ENCODE measurements at regions of chr17 and their contacts with region 1.

Region 1: GRCh38 chr17:40219073-40219860 is at the start of gene WIPF2:
- DNase-seq: peak; percentile 98
- ATAC-seq: peak; percentile 96
- H3K4me3 Mint-ChIP-seq: peak within 1 kb of the TSS; percentile 92
- H3K27ac Mint-ChIP-seq: peak within 1 kb of the TSS; percentile 100
- H3K4me1 Mint-ChIP-seq: peaks cover 26% of the 10 kb centered on the region
- H3K27me3 Mint-ChIP-seq: no peaks in the 10 kb centered on the region
- total RNA-seq, gene WIPF2: 24.1 to 26.1 TPM

Region 2: GRCh38 chr17:40203131-40203530 is 16.1 kb before region 1 on chr17:
- CTCF ChIA-PET with region 1: interaction called, 20 read pairs
- DNase-seq: no peak
- ATAC-seq: no peak
- H3K4me3 Mint-ChIP-seq: no peak overlapping the region
- H3K27ac Mint-ChIP-seq: no peak overlapping the region
- H3K4me1 Mint-ChIP-seq: peaks cover 7% of the 10 kb centered on the region
- H3K27me3 Mint-ChIP-seq: peaks cover 6% of the 10 kb centered on the region

Region 3: DNA sequence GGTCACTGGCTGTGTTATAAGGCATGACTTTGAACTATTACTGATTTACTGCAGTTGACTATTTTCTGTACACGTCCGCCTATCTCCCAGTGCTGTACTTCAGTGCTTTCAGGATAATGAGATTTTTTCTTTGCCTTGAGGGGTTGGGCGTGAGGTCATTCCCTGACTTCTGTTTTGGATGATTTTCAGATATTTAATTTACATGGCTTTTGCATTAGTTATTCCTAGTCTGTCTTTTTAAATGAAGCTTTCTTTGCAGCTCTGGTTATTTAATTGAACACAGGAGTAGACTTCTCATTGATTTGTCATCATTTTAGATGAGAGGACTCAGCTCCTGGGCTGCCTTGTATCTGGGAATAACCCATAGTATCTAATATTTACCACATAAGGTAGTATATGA is 23.5 kb after region 1 on chr17:
- CTCF ChIA-PET with region 1: interaction called, 10 read pairs
- DNase-seq: no peak
- ATAC-seq: no peak
- H3K4me3 Mint-ChIP-seq: no peak overlapping the region
- H3K27ac Mint-ChIP-seq: no peak overlapping the region
- H3K4me1 Mint-ChIP-seq: peaks cover 12% of the 10 kb centered on the region
- H3K27me3 Mint-ChIP-seq: no peaks in the 10 kb centered on the region

Region 4: GRCh38 chr17:40281663-40282062 is 62.4 kb after region 1 on chr17:
- CTCF ChIA-PET with region 1: interaction called, 14 read pairs
- DNase-seq: peak; percentile 59
- ATAC-seq: peak; percentile 41
- H3K4me3 Mint-ChIP-seq: peak overlapping the region; percentile 35
- H3K27ac Mint-ChIP-seq: peak overlapping the region; percentile 74
- H3K4me1 Mint-ChIP-seq: peaks cover 49% of the 10 kb centered on the region
- H3K27me3 Mint-ChIP-seq: no peaks in the 10 kb centered on the region

Region 5: GRCh38 chr17:40287494-40288369 is 68.5 kb after region 1 on chr17 and contains the start of gene CDC6:
- CTCF ChIA-PET with region 1: interaction called, 15 read pairs
- DNase-seq: peak; percentile 100
- ATAC-seq: peak; percentile 94
- H3K4me3 Mint-ChIP-seq: peak within 1 kb of the TSS; percentile 99
- H3K27ac Mint-ChIP-seq: peak within 1 kb of the TSS; percentile 98
- H3K4me1 Mint-ChIP-seq: peaks cover 56% of the 10 kb centered on the region
- H3K27me3 Mint-ChIP-seq: no peaks in the 10 kb centered on the region
- total RNA-seq, gene CDC6: 109 to 111 TPM

Measured in activated CD8-positive, alpha-beta memory T cell treated with anti-CD3 and anti-CD28 coated beads, Interleukin-2, amount 10 ng/mL, durations not matched to agents 7 days and 5 days (primary cell).